GM10248 (cell line): ENCODE measurements at regions of chr15 and their contacts with region 1.

Region 1: GRCh38 chr15:92938387-92938786 is 38.3 kb downstream of the CHD2 start:
- DNase-seq: no peak
- CTCF ChIP-seq: no peak

Region 2: GRCh38 chr15:92917606-92918407 is 20.6 kb before region 1 on chr15:
- CTCF ChIA-PET with region 1: interaction called, 40 read pairs
- POLR2A ChIA-PET with region 1: no interaction called
- DNase-seq: peak; percentile 79
- CTCF ChIP-seq: peak; percentile 82

Region 3: DNA sequence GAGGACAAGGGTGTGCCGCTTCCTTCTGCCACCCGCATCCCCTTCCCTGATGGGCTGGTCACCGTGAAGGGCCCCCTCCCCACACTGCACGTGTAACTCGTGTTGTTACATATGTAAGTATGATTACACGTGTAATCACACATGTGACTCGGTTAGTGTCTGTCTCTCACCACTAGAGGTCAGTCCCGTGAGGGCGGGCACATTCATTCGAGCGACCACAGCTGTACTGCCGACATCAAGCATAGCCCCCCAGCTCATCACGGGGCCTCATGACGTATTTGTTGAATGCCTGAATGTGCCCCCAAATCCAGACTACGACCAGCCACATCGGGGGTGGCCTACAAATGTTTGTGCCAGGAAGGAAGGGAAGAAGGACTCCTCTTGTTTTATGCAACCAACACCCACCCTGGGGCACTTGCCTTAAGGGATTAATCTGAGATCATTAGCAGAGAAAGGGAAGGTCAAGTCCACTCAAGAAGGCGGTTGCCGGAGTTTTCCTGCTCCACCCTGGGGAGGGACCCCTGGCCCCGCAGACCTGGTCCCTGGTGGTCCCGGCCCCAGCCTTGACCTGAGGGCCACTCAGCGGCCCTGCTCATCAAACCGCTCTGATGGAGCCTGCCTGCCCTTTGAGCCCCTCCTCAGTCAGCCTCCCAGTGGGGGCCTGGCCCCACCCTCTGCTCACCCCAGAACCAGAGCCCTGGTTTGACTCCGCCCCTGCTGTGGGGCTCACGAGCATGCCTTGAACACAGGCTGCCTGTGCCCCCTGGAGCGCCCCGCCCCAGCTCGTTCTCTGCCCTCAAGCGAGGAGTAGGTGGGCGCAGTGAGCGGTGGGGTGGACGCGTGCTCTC is 97.8 kb after region 1 on chr15:
- CTCF ChIA-PET with region 1: no interaction called
- POLR2A ChIA-PET with region 1: no interaction called
- DNase-seq: peak; percentile 78
- CTCF ChIP-seq: peak; percentile 52